ENCODE measurements at regions of chr19 and their contacts with region 1.

Region 1: GRCh38 chr19:2962045-2962561 is 15.3 kb upstream of the TLE6 start:
- DNase-seq: peak; percentile 51
- ATAC-seq: peak; percentile 75
- H3K4me3 Mint-ChIP-seq: no peak overlapping the region
- H3K27ac Mint-ChIP-seq: no peak overlapping the region
- H3K4me1 Mint-ChIP-seq: peaks cover 5% of the 10 kb centered on the region
- H3K27me3 Mint-ChIP-seq: peaks cover 3% of the 10 kb centered on the region

Region 2: DNA sequence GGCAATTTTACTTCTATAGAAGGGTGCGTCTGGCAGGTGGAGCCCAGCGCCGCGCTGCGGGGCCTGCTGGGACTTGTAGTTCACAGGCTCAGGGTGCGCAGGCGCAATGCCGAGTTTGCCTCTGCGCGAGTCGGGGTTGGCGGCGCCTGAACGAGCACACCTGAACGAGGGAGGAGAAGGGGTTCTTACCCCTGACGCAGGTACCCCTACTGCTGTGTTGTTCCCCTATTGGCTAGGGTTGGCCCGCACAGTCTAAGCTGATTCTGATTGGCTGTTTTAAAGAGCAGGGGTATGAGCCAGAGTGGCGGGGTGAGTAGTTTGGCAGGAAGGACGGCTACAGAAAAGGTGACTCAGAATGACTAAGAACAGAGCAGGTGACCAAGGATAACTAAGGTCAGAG is 144.8 kb before region 1 on chr19:
- CTCF ChIA-PET with region 1: no interaction called
- DNase-seq: no peak
- ATAC-seq: no peak
- H3K4me3 Mint-ChIP-seq: no peak overlapping the region
- H3K27ac Mint-ChIP-seq: no peak overlapping the region
- H3K4me1 Mint-ChIP-seq: peaks cover 7% of the 10 kb centered on the region
- H3K27me3 Mint-ChIP-seq: no peaks in the 10 kb centered on the region

Region 3: DNA sequence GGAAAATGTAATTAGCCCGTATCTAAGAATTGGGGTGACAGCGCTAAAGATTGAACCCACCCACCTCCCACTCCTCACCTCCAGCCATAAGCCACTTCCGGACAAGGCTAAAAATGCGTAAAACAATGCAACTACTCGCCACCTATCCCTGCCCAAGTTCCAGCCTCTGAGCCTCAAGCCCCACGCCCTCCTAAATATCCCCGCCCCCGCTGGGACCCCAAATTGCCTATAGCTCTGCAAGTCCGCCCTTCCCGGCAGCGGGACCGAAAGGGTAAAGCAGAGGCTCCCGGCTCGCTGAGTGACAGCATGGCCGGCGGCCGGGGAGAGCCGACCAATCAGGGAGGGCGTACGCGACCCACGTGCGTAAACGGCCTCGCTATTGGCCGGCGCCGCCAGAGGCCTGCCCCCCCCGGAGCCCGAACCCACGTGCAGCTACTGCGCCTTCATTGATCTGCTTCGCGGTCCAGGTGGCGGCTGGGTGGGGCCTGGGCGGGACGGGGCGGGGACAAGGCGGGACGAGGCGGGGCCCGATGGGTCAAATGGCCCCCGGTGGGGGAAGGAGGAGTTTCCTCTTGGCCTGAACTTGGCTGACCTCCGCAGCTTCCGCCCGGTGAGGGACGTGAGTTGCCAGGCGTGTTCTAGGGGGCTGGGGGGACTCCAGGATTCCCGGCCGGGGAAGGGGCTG is 15.0 kb after region 1 on chr19 and contains the start of gene TLE6:
- CTCF ChIA-PET with region 1: interaction called, 27 read pairs
- DNase-seq: peak; percentile 98
- ATAC-seq: peak; percentile 100
- H3K4me3 Mint-ChIP-seq: peak within 1 kb of the TSS; percentile 84
- H3K27ac Mint-ChIP-seq: peak within 1 kb of the TSS; percentile 87
- H3K4me1 Mint-ChIP-seq: peaks cover 22% of the 10 kb centered on the region
- H3K27me3 Mint-ChIP-seq: peaks cover 15% of the 10 kb centered on the region
- total RNA-seq, gene TLE6: 1.9 to 3.2 TPM

Region 4: GRCh38 chr19:3035542-3036118 is 73.5 kb after region 1 on chr19:
- CTCF ChIA-PET with region 1: interaction called, 11 read pairs
- DNase-seq: peak; percentile 98
- ATAC-seq: peak; percentile 96
- H3K4me3 Mint-ChIP-seq: peak overlapping the region; percentile 73
- H3K27ac Mint-ChIP-seq: peak overlapping the region; percentile 94
- H3K4me1 Mint-ChIP-seq: peaks cover 12% of the 10 kb centered on the region
- H3K27me3 Mint-ChIP-seq: peaks cover 28% of the 10 kb centered on the region

Region 5: GRCh38 chr19:3125900-3126524 is 163.9 kb after region 1 on chr19:
- CTCF ChIA-PET with region 1: interaction called, 10 read pairs
- DNase-seq: peak; percentile 69
- ATAC-seq: peak; percentile 93
- H3K4me3 Mint-ChIP-seq: no peak overlapping the region
- H3K27ac Mint-ChIP-seq: no peak overlapping the region
- H3K4me1 Mint-ChIP-seq: peaks cover 16% of the 10 kb centered on the region
- H3K27me3 Mint-ChIP-seq: no peaks in the 10 kb centered on the region

Measured in activated CD8-positive, alpha-beta memory T cell treated with anti-CD3 and anti-CD28 coated beads, Interleukin-2, amount 10 ng/mL, durations not matched to agents 7 days and 5 days (primary cell).